ENCODE measurements at regions of chr5 and their contacts with region 1.

Region 1: DNA sequence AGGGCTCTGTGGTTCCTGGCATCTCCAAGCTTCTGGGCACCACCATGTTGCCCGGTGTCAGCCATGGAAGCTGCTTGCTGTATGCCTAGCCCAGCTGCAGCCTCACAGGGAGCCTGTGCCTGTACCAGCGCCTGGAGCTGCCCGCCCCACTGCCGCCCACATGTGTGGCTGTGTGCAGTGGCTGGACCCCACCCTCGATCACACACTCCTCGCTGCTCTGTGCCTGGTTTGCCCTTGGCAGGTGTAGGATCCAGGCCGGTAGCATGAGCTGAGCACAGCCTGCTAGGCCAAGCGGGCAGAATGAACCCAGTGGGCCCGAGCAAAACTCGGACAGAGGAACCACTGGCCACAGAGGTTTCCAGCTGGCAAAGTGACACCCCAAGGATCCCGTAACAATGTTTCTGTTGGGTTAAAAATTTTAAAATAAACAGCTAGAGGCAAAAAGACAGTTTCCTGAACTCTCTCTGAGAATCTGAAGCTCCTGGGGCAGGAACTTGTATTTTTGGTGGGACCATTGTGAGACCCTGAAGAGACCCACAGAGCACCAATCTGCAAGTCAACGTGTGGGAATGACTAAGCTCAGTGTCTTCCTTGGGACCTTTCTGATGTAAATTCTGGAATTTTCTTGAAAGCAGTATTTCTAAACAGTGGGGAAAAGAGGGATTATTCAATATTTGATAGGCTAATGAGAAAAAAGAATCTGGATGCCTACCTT is 73.1 kb upstream of the CCDC112 start:
- DNase-seq: peak in 1 of 2 experiments; percentile 52
- H3K4me3 ChIP-seq: no peak overlapping the region
- H3K27ac ChIP-seq: peak overlapping the region; percentile 80
- H3K4me1 ChIP-seq: peaks cover 0 to 11% (median 6%) of the 10 kb centered on the region in 4 experiments; a peak in 5 of 7 replicates
- H3K27me3 ChIP-seq: no peaks in the 10 kb centered on the region; a peak in 1 of 7 replicates
- CTCF ChIP-seq: no peak
- EP300 ChIP-seq: no peak
- POLR2A ChIP-seq: no peak
- RAD21 ChIP-seq: no peak

Region 2: DNA sequence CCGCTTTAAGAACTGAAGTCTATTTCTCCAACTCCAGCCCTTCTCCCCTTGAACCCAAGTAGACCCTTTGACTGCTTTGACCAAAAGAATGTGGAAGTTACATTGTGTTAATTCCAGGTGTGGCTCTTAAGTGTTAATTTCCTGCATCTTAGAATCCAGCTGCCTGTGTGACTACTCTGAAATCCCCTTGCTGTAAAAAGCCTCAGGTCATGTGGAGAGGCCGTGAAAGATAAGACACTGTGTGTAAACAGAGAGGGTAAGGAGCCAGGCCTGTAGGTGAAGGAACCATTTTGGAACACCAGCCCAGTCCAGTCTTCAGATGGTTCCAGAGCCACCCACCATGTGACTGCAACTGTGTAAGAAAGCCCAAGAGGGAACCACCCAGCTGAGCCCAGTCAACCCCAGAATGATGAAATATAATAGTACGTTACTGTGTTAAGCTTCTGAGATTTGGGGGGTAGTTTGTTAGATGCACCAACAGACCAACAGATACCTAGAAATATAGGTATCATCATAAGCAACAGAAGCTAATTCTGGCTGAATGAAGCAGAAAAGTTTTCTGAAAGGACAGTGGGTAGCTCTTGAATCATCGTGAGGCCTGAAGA is 13.7 kb before region 1 on chr5:
- CTCF ChIA-PET with region 1: interaction called, 11 read pairs
- POLR2A ChIA-PET with region 1: interaction called, 3 read pairs
- DNase-seq: no peak
- H3K4me3 ChIP-seq: no peak overlapping the region
- H3K27ac ChIP-seq: no peak overlapping the region
- H3K4me1 ChIP-seq: peaks cover 0 to 4% (median 1%) of the 10 kb centered on the region in 4 experiments; a peak in 1 of 7 replicates
- H3K27me3 ChIP-seq: no peaks in the 10 kb centered on the region
- CTCF ChIP-seq: no peak
- EP300 ChIP-seq: no peak
- POLR2A ChIP-seq: no peak
- RAD21 ChIP-seq: no peak

Measured in H1 (cell line).